Right ventricle myocardium superior (tissue), 1 donor: ENCODE measurements at regions of chr1 and their contacts with region 1.

Region 1: DNA sequence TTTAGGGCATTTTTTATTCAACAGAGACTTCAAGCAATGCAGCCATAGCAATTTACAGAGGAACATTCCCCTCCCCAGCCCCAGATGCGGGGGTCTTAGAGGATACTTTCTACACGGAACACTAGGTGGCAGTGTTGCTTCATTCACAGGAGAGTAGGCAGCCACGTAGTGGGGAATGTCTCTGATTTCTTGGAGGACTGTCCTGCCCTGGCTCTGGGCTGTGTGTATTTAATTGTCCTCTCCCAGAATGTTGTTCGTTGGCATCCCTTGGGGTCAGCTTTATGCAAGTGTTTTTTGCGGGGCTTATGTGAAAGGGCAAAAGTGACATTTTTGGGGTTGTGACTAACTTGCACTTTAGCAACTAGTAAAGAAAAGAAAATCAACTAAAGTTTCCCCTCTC is 96.9 kb downstream of the PAPPA2 start:
- DNase-seq: no peak
- ATAC-seq: peak; percentile 96

Region 2: GRCh38 chr1:176374967-176375569 is 184.8 kb before region 1 on chr1:
- intact Hi-C with region 1: loop called (anchors 10 kb)
- DNase-seq: peak; percentile 77
- ATAC-seq: peak; percentile 82

Region 3: GRCh38 chr1:176691251-176692228 is 131.7 kb after region 1 on chr1:
- intact Hi-C with region 1: loop called (anchors 5 kb)
- DNase-seq: no peak
- ATAC-seq: peak; percentile 69

Region 4: DNA sequence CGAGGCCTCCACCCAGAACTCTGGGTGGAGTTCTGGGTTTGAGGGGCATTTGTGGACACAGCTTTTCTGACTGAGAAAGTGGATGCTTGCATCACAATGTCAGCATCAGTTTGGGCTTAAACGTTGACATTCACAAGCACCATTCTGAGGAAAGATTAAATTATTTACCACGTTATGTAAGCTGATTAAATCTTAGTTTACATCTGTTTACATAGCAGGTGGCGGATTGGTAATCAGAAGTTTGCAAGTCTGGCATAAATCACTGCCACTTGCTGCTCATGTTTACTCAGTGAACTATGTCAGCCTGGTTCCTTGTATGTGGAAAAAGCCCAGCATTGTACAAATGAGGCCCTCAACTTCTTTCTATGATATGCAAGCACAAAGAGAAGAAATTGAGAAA is 213.2 kb after region 1 on chr1:
- intact Hi-C with region 1: no loop called
- DNase-seq: no peak
- ATAC-seq: no peak

Region 5: DNA sequence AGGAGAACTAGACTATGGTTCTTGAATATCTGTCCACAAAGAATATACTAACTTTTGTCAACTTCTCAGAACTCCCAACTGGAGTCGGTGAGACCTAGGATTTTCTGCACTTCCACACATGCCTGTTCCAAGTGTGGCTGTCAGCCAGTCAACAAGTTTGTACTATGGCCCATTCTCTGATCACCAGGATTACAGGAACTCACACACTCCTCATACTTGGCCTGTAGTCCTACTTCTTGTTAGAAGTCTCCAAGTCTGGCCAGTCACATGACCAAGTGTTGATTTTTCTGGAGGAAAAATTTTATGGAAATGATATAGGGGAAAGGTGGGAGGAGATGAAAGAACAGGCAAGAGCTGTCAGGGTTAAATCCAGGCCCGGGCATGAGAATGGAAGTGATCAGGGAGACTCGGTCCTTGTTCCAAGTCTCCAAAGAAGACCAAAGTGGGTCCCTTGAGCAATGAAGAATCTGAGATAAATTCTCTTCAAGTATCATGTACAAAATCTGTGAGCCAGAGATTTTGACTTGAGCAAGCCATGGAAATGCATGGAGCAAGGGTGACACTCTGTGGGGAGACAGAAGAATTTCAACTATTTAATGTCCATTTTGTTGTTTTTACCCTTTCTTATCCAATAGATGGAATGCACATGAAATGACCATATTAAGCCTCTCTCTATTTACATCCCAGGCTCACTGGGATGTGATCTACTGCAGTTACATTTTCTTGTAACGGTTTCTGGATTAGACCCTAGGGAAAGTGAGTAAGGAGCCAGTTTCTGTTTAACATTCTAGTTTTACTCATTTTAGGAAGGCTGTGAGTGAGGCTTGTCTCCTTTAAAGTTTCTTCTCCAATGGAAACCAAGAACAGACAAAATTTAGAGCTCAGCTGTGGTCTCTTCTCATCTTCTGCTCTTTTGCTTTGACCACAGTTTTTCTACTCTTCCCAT is 283.7 kb after region 1 on chr1:
- intact Hi-C with region 1: loop called (anchors 2 kb)
- DNase-seq: no peak
- ATAC-seq: peak; percentile 66

Region 6: DNA sequence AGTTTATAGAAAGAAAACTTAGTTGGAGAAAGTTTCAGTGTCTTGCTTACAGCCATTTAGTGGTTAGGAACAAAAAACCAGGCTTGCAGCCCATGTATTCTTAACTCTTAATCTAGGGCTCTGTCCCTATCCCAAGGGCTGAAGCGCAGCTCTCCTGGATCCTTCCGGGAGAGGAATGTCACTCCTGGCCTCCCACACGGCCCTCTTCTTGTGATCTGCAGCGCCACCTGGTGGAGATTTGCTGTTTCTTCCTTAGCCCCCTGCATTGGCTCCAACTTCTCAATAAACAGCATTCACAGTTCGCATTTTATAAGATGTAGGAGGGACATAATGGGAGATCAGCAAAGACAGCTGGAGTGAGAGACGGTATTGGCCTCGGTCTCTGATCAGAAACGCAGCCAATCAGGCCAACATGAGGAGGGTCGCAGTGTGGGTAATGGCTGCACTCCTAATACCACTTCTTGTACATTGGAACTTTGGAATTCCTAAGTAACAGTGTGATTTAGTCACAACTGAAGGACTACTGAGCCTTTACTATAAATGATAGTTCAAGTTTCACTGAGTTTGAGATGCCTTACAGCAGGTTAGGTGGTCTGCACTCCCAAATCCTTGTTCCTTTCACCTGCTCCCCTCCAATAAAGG is 321.2 kb after region 1 on chr1:
- intact Hi-C with region 1: loop called (anchors 5 kb)
- DNase-seq: peak; percentile 71
- ATAC-seq: peak; percentile 91